ENCODE measurements at regions of chr3 and their contacts with region 1.

Region 1: GRCh38 chr3:122858373-122858772 is 63.5 kb downstream of the SLC49A4 start:
- DNase-seq: no peak
- H3K4me3 Mint-ChIP-seq: no peak overlapping the region
- H3K27ac Mint-ChIP-seq: no peak overlapping the region
- H3K4me1 Mint-ChIP-seq: peaks cover 21% of the 10 kb centered on the region
- H3K27me3 Mint-ChIP-seq: no peaks in the 10 kb centered on the region
- CTCF ChIP-seq: no peak

Region 2: GRCh38 chr3:122754929-122755328 is 103.4 kb before region 1 on chr3:
- CTCF ChIA-PET with region 1: no interaction called
- intact Hi-C with region 1: loop called (anchors 2 kb)
- DNase-seq: peak; percentile 32
- H3K4me3 Mint-ChIP-seq: no peak overlapping the region
- H3K27ac Mint-ChIP-seq: no peak overlapping the region
- H3K4me1 Mint-ChIP-seq: no peaks in the 10 kb centered on the region
- H3K27me3 Mint-ChIP-seq: no peaks in the 10 kb centered on the region
- CTCF ChIP-seq: peak; percentile 59

Region 3: GRCh38 chr3:122875547-122876127 is 17.3 kb after region 1 on chr3:
- CTCF ChIA-PET with region 1: no interaction called
- intact Hi-C with region 1: no loop called
- DNase-seq: no peak
- H3K4me3 Mint-ChIP-seq: no peak overlapping the region
- H3K27ac Mint-ChIP-seq: no peak overlapping the region
- H3K4me1 Mint-ChIP-seq: no peaks in the 10 kb centered on the region
- H3K27me3 Mint-ChIP-seq: no peaks in the 10 kb centered on the region
- CTCF ChIP-seq: no peak

Region 4: DNA sequence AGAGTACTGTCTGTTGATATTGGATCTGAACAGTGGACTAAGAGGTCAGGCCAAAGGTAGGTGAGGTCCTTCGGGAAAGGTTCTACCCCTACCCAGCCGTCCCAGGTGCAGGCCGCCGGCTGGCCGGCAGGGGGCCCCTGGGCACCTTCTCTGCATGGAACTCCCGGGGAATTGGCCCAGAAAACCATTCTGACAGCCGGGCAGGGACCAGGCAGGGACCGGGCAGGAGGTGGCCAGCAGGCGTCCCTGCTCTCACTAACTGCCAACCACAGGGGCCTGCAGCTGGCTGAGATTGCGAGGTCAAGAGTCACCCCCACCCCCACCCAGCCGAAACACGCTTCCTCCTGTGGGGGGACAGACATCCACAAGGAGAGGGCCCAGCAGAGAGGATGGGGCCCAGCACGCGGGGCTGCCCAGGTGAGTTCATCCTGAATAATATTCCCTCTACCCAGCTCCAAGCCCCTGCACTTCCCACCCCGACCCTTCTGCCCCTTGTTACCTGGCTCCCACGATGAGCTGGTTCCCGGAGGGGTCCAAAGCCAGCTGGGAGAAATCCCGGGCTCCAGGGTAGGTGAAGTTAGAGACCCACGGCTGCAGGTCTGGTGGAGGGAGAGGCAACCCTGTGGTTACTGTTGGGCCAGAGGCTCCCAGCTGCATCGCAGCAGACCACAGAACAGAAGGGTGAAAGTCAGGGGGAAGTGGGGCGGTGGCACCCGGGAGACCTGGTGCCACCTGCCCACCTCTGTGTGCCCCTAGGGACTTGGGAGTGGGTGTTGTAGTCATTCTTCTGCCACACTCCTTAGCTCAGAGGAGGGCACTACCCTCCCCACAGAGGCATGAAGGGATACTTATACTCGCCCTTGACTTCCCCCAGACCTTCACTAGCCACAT is 84.8 kb after region 1 on chr3:
- CTCF ChIA-PET with region 1: no interaction called
- intact Hi-C with region 1: loop called (anchors 5 kb)
- DNase-seq: peak; percentile 88
- H3K4me3 Mint-ChIP-seq: no peak overlapping the region
- H3K27ac Mint-ChIP-seq: no peak overlapping the region
- H3K4me1 Mint-ChIP-seq: no peaks in the 10 kb centered on the region
- H3K27me3 Mint-ChIP-seq: peaks cover 14% of the 10 kb centered on the region
- CTCF ChIP-seq: peak; percentile 91

Measured in Calu3 (cell line).